ENCODE measurements at regions of chr5 and their contacts with region 1.

Region 1: DNA sequence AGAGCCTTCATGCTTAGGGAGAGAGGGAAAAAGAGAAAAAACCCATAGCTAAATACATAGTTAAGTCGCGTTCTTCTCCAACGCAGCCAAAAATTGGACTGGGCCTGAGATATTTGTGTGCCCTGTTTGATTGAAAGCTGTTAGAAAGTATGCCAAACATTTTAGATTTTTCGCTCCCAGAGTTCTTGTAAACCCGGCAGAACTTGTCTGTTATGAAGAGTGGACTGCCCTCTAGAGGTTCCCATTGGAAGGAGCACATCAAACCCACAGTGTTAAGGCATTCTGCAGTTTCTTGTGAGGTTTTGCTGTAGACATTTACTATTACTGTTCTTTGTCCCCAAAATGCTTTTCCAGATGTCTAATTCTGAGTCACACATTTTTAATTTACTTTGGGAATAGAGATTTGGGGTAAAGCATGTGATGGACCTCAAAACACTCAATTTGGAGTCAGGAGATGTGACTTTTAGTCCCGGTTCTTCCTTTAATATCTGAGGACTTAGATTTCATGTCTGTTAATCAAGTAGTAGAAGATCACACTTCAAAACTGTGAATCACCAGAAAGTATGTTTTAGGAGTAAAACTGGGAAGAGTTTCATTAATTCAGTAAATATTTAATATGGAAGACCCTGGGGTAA is 96.6 kb downstream of the PCSK1 start:
- DNase-seq: peak; percentile 92
- H3K4me3 ChIP-seq: no peak overlapping the region
- H3K27ac ChIP-seq: peak overlapping the region; percentile 32
- H3K4me1 ChIP-seq: peaks cover 7% of the 10 kb centered on the region
- H3K27me3 ChIP-seq: no peaks in the 10 kb centered on the region
- CTCF ChIP-seq: peak; percentile 84 to 88
- POLR2A ChIP-seq: no peak

Region 2: DNA sequence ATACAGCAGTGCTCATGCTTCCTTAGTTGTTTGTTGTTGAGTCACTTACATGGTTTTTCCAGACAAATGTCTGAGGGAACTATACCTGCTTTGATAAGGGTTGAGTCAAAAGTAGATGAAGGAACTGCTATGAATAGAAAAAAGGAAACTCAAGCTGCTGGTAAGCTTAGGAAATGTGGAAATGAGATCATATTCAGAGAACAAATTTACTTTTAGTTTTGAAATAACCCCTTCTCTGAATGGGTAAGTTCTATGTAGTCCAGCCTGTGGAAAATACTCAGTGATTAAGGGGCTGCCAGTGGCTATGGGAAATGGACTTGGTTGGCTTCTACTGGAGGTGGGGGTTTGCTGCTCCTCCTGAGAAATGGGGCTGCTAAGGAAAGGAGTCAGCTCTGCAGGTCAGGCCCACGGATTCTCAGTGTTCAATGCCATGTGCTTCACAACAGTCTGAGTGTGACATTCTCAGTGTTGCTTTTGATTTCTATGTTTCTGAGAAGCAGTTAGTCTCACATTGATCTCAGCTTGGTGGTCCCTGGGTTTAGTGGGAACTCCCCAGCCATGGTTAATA is 466.3 kb before region 1 on chr5:
- CTCF ChIA-PET with region 1: interaction called, 10 read pairs
- POLR2A ChIA-PET with region 1: no interaction called
- dilution Hi-C with region 1: no loop called
- intact Hi-C with region 1: no loop called
- DNase-seq: peak; percentile 87
- H3K4me3 ChIP-seq: no peak overlapping the region
- H3K27ac ChIP-seq: peak overlapping the region; percentile 94
- H3K4me1 ChIP-seq: peaks cover 19% of the 10 kb centered on the region
- H3K27me3 ChIP-seq: no peaks in the 10 kb centered on the region
- CTCF ChIP-seq: no peak
- POLR2A ChIP-seq: no peak

Region 3: DNA sequence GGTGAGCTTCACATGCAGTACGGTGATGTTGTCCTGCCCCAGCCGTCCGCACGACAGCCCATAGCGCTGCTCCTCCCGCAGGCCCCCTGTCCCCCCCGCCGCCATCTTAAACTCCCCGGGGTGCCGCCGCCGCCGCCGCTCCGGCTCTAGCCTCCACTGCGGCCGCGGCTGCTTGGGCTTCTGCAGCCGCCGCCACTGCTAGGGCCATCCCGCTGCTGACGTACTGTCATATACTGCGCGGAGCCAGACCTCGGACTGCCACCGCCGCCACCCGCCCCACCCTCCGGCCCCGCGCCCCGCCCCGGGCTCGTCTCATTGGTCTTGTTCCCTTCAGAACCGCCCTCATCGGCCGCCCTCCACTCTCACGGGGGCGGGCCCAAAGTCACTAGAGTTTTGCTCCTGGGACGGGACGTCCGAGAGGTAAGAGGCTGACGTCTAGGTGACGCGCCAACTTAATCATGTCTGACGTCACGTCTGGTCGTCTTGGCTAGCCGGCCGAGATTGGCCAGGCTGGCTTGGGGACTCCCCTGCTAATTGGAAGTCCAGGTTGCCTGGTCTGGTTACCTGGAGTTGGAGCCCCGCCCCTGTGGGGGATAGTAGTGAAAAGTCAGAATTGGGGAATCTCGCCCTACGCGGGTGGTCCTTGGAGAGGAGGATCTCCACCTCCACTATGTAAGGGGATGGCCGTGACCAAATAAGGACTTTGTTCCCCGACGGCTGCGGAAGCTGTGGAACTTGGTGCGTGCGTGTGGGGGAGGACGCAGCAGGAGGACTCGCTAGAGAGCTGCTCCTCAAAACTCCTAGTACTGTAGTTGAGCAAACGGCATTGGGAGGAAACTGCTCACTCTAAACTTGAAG is 374.6 kb before region 1 on chr5 and contains the start of gene ELL2:
- CTCF ChIA-PET with region 1: interaction called, 107 read pairs
- POLR2A ChIA-PET with region 1: no interaction called
- dilution Hi-C with region 1: loop called (anchors 25 kb)
- intact Hi-C with region 1: loop called (anchors 1 kb)
- DNase-seq: peak; percentile 98
- H3K4me3 ChIP-seq: peak within 1 kb of the TSS; percentile 66 to 94 (median 79)
- H3K27ac ChIP-seq: peak within 1 kb of the TSS; percentile 88
- H3K4me1 ChIP-seq: peaks cover 12% of the 10 kb centered on the region
- H3K27me3 ChIP-seq: no peaks in the 10 kb centered on the region
- CTCF ChIP-seq: no peak
- POLR2A ChIP-seq: peak; percentile 68
- total RNA-seq, gene ELL2: 26.0 and 39.8 TPM in 2 replicates

Region 4: DNA sequence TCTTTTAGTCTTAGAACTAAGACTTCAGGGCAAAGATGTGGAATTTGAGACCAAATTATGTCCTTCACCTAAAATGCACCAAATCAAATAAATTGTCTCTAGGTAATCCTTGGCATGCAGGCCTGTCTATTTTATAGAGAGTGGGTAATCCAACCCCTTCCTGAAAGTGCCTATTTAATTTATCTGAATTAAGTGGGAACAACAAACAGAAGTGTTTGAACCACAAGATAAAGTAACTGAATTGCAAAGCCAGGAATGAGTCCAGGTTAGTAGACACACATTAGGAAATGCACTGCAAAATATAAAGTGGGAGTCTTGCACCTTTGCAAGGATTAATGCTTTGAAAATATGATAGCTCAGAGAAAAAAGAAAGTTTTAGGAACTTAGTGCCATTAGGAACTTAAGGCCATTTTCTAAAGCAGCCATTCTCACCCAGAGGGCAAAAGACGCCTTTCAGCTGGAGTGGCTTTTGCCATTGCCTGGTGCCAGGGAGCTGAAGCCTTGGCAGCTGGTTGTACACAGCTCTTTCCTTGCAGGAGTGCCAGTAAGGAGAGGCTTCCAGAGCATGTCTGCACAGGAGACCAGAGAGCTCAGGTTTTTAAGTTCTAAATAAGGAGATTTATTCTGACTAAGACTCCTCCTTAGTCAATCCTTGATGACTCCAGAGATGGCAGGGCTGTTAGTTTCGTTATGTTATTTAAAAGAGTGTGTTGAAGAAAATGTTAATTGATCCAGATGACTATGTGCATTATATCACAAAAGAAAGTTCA is 223.1 kb before region 1 on chr5:
- CTCF ChIA-PET with region 1: no interaction called
- POLR2A ChIA-PET with region 1: no interaction called
- dilution Hi-C with region 1: no loop called
- intact Hi-C with region 1: loop called (anchors 10 kb)
- DNase-seq: no peak
- H3K4me3 ChIP-seq: no peak overlapping the region
- H3K27ac ChIP-seq: no peak overlapping the region
- H3K4me1 ChIP-seq: peaks cover 7% of the 10 kb centered on the region
- H3K27me3 ChIP-seq: no peaks in the 10 kb centered on the region
- CTCF ChIP-seq: no peak
- POLR2A ChIP-seq: no peak

Region 5: DNA sequence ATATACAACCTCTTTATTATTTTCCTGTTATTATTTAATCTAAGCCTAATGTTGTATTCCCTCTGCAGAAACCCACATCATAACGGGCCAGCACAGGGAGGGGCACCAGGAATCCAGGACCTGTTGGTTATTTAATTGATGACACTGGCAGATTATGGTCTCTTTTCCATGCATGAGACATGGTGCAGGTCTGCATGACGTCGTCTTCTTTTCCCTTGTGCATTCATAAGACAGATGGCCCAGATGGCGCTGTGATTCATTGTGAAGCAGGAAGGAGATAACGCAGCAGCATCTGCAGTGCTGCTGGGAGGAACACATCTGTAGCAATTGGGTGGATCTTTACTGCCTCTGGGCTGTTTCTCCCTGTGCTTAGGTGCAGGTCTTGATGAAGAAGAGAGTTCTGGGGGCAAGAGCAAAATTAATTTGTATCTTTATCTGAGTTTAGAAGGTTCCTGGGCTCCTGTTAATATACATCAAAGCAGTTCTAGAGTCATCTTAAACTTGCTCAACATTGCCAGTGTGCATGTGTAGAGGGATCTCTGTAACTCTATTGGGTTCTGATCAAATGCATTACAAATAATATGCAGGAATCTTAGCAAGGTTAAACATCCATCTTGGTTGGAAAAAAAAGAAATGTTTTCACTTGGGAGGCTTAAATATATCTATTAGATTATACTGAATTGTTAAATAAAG is 79.5 kb before region 1 on chr5:
- CTCF ChIA-PET with region 1: interaction called, 10 read pairs
- POLR2A ChIA-PET with region 1: no interaction called
- dilution Hi-C with region 1: no loop called
- intact Hi-C with region 1: loop called (anchors 5 kb)
- DNase-seq: peak; percentile 64
- H3K4me3 ChIP-seq: no peak overlapping the region
- H3K27ac ChIP-seq: no peak overlapping the region
- H3K4me1 ChIP-seq: peaks cover 55% of the 10 kb centered on the region
- H3K27me3 ChIP-seq: no peaks in the 10 kb centered on the region
- CTCF ChIP-seq: no peak
- POLR2A ChIP-seq: no peak

Measured in endothelial cell of umbilical vein (primary cell).